ENCODE measurements at regions of chr9 and their contacts with region 1.

Region 1: GRCh38 chr9:102796244-102796643 is 198.9 kb upstream of the CYLC2 start:
- DNase-seq: no peak
- H3K4me3 ChIP-seq: no peak overlapping the region
- H3K27ac ChIP-seq: no peak overlapping the region
- H3K4me1 ChIP-seq: no peaks in the 10 kb centered on the region
- H3K27me3 ChIP-seq: no peaks in the 10 kb centered on the region
- CTCF ChIP-seq: no peak
- EP300 ChIP-seq: no peak
- POLR2A ChIP-seq: no peak

Region 2: GRCh38 chr9:103474156-103474555 is 677.9 kb after region 1 on chr9:
- intact Hi-C with region 1: loop called (anchors 10 kb)
- DNase-seq: no peak
- H3K4me3 ChIP-seq: no peak overlapping the region
- H3K27ac ChIP-seq: no peak overlapping the region
- H3K4me1 ChIP-seq: no peaks in the 10 kb centered on the region
- H3K27me3 ChIP-seq: no peaks in the 10 kb centered on the region
- CTCF ChIP-seq: no peak
- EP300 ChIP-seq: no peak
- POLR2A ChIP-seq: no peak

Measured in sigmoid colon (tissue), 7 donors.